ENCODE measurements at regions of chr2 and their contacts with region 1.

Region 1: GRCh38 chr2:160970052-160970965 is 189.9 kb upstream of the TANK start:
- DNase-seq: peak in 3 of 4 experiments; percentile 20 to 30 (median 23)
- ATAC-seq: peak; percentile 73
- H3K4me3 ChIP-seq: no peak overlapping the region
- H3K27ac ChIP-seq: no peak overlapping the region
- H3K4me1 ChIP-seq: no peaks in the 10 kb centered on the region
- H3K27me3 ChIP-seq: no peaks in the 10 kb centered on the region
- CTCF ChIP-seq: peak; percentile 33 to 58 (median 45); a peak in 4 of 6 replicates
- EP300 ChIP-seq: no peak
- POLR2A ChIP-seq: no peak
- RAD21 ChIP-seq: peak; percentile 30 to 62; a peak in 3 of 4 replicates

Region 2: GRCh38 chr2:160252278-160252887 is 717.9 kb before region 1 on chr2:
- CTCF ChIA-PET with region 1: no interaction called
- POLR2A ChIA-PET with region 1: no interaction called
- in situ Hi-C with region 1: no loop called
- intact Hi-C with region 1: loop called (anchors 5 kb)
- DNase-seq: peak; percentile 28 to 39 (median 38)
- ATAC-seq: peak; percentile 53; the same call in 1 of the 3 replicates
- H3K4me3 ChIP-seq: no peak overlapping the region
- H3K27ac ChIP-seq: no peak overlapping the region
- H3K4me1 ChIP-seq: no peaks in the 10 kb centered on the region
- H3K27me3 ChIP-seq: no peaks in the 10 kb centered on the region
- CTCF ChIP-seq: peak; percentile 31 to 72 (median 56); a peak in 5 of 6 replicates
- EP300 ChIP-seq: no peak
- POLR2A ChIP-seq: no peak
- RAD21 ChIP-seq: peak; percentile 40 to 64

Region 3: DNA sequence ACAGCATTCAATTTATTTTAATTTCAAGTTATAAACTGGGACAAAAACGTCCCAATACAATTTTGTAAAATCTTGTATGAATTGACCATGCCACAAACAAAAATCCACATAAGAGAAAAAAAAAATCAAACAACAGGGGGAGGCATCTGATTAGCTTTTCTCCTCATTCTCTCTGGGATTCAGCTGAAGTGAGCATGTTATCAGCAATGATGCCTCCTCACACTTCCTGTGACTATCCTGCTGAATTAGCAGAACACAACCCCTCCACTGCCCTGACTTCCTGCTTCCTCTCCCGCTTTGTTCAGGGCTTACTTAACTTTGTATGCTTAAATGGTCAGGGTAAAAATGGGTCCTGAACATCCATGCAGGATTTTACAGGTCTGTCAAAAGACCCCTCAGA is 638.0 kb before region 1 on chr2:
- CTCF ChIA-PET with region 1: no interaction called
- POLR2A ChIA-PET with region 1: no interaction called
- in situ Hi-C with region 1: no loop called
- intact Hi-C with region 1: loop called (anchors 10 kb)
- DNase-seq: no peak
- ATAC-seq: 0 out of 3 replicates have a peak, but pooled peaks have one; percentile 27
- H3K4me3 ChIP-seq: no peak overlapping the region
- H3K27ac ChIP-seq: no peak overlapping the region
- H3K4me1 ChIP-seq: no peaks in the 10 kb centered on the region
- H3K27me3 ChIP-seq: no peaks in the 10 kb centered on the region
- CTCF ChIP-seq: no peak
- EP300 ChIP-seq: no peak
- POLR2A ChIP-seq: no peak
- RAD21 ChIP-seq: peak in 1 of 2 experiments; percentile 10; a peak in 1 of 4 replicates

Region 4: DNA sequence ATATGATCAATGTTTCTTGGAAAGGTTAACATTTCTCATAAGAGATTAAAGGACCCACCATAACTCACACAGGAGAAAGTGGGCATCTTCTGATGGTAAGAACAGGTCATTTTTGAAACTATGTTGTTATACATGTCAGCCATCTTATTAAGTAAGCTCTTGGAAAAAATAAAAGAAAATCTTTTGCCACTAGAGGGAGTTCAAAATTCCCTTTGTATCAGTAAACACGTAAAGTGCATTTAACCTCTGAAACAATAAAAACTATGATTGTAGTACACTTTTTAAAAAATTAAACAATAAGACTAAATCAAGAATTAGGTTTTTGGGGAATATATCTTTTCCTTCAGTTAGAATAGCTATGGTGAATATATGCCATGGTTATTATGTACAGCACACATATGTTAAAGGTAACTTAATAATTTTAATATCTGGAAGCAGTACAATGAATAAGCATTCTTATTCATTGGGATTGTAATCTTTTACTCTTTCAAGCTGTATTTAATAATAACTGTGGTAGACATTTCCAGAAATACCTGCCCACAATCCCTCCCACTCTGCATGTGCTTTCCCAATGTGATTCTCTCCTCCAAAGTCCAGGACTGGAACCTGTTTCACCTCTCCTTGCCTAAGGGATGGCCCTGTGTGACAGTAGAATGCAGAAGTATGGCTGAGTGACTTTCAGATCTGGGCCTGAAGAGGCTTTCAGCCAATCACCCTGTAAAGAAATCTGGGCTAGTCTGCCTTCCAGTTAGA is 540.9 kb before region 1 on chr2:
- CTCF ChIA-PET with region 1: no interaction called
- POLR2A ChIA-PET with region 1: no interaction called
- in situ Hi-C with region 1: no loop called
- intact Hi-C with region 1: loop called (anchors 5 kb)
- DNase-seq: peak; percentile 14 to 34 (median 20)
- ATAC-seq: peak; percentile 74
- H3K4me3 ChIP-seq: no peak overlapping the region
- H3K27ac ChIP-seq: no peak overlapping the region
- H3K4me1 ChIP-seq: no peaks in the 10 kb centered on the region
- H3K27me3 ChIP-seq: no peaks in the 10 kb centered on the region
- CTCF ChIP-seq: peak in 2 of 3 experiments; percentile 14 to 55; a peak in 4 of 6 replicates
- EP300 ChIP-seq: no peak
- POLR2A ChIP-seq: no peak
- RAD21 ChIP-seq: peak; percentile 35 to 48; a peak in 3 of 4 replicates

Region 5: GRCh38 chr2:161352719-161353118 is 382.4 kb after region 1 on chr2:
- CTCF ChIA-PET with region 1: no interaction called
- POLR2A ChIA-PET with region 1: no interaction called
- in situ Hi-C with region 1: no loop called
- intact Hi-C with region 1: no loop called
- DNase-seq: no peak
- ATAC-seq: 0 out of 3 replicates have a peak, but pooled peaks have one; percentile 31
- H3K4me3 ChIP-seq: no peak overlapping the region
- H3K27ac ChIP-seq: no peak overlapping the region
- H3K4me1 ChIP-seq: no peaks in the 10 kb centered on the region; a peak in 1 of 5 replicates
- H3K27me3 ChIP-seq: no peaks in the 10 kb centered on the region
- CTCF ChIP-seq: no peak
- EP300 ChIP-seq: no peak
- POLR2A ChIP-seq: no peak
- RAD21 ChIP-seq: no peak